Activated CD4-positive, alpha-beta T cell treated with anti-CD3 and anti-CD28 coated beads, Interleukin-2, amount 10 ng/mL, durations not matched to agents 24 days and 14 days (primary cell): ENCODE measurements at regions of chr9 and their contacts with region 1.

Region 1: DNA sequence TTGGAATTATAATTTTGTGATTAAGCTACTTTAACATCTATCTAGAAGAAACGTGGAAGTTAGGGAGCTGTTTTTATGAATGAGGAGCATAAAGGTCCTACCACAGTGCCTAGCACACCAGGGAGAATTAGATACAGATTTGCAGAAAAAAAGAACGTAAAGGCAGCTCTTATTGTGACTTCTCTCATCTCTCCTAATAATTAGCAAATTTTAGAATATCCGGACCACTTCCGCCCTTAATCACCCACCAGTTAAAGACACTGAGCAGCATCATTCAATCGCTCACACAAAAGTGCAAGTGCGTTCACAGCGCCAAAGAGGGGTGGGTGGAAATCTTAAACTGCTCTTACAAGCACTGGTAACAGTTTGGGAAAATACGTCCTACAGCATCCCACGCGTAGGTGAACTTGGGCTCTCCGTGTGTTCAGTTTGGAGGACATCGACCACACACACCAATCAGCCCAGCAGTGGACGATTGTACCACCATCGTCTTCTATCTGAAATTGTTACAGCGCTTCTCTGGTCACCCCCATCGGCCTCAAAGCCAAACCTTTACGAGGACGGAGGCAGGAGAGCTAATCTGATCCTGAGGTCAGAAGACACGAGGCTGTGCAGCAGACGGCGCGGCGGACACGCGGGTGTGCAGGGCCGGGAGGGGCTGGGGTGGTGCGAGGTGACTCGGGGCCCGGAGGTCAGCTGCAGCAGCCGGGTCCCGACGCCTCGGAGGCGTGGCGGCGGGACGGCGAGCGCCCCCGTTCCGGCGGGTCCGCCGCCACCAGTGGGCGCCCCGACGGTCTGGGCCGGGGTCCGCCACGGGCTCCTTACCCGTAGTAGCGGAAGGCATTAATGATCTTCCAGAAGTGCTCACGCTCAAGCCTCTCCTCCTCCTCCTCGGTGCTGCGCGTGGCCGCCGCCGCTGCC is 646 bp downstream of the CARNMT1 start:
- DNase-seq: peak; percentile 86
- H3K4me3 Mint-ChIP-seq: peak overlapping the region; percentile 96
- H3K27ac Mint-ChIP-seq: peak overlapping the region; percentile 99
- H3K4me1 Mint-ChIP-seq: peaks cover 37% of the 10 kb centered on the region
- H3K27me3 Mint-ChIP-seq: peaks cover 2% of the 10 kb centered on the region

Region 2: GRCh38 chr9:73132034-73132776 is 1895.2 kb before region 1 on chr9:
- intact Hi-C with region 1: loop called (anchors 5 kb)
- DNase-seq: peak; percentile 93
- H3K4me3 Mint-ChIP-seq: peak overlapping the region; percentile 82
- H3K27ac Mint-ChIP-seq: peak overlapping the region; percentile 91
- H3K4me1 Mint-ChIP-seq: peaks cover 40% of the 10 kb centered on the region
- H3K27me3 Mint-ChIP-seq: no peaks in the 10 kb centered on the region

Region 3: DNA sequence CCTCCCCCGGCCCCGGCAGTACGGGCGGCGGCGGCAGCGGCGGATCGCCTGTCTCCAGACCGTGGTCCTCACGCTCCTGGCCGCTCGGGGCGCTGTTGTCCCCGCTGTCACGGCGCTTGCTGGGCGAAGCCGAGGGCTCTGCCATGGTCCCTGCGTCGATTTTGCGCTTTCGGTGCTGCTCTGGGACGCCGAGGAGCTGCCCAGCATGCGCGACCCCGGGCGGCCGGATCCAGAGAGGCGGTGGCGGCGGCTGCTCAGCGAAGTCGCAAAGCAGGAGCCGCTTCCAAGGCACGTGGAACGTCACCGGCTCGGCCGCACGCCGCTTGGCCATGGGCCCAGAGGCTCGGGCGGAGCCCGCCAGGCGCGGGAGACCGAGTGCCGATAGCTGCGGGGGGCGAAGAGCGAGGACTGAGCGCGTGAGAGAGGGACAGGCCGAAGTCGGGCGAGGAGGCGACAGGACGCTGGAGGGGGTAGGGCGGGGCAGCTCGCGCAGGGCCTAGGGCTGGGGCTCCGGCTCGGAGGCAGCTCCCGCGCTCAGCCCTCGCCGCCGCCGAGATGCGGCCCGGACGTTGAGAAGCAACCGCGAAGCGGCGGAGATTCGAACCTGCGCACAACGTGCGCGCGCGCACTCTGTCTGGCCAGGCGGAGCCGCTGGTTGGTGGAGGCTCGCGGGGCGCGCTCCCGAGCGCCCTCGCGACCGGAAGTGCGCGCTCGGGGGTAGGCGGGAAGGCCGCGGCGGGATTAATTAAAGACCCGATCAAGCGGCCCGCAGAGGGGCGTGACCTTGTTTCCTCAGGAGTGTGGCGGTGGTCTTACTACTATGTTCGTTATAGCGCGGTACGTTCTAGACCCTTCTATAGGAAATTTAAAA is 74.9 kb before region 1 on chr9 and contains the start of gene C9orf40:
- intact Hi-C with region 1: loop called (anchors 1 kb)
- DNase-seq: peak; percentile 97
- H3K4me3 Mint-ChIP-seq: peak within 1 kb of the TSS; percentile 98
- H3K27ac Mint-ChIP-seq: peak within 1 kb of the TSS; percentile 97
- H3K4me1 Mint-ChIP-seq: peaks cover 39% of the 10 kb centered on the region
- H3K27me3 Mint-ChIP-seq: no peaks in the 10 kb centered on the region
- total RNA-seq, gene C9orf40: 19.6 and 20.0 TPM in 2 replicates

Region 4: DNA sequence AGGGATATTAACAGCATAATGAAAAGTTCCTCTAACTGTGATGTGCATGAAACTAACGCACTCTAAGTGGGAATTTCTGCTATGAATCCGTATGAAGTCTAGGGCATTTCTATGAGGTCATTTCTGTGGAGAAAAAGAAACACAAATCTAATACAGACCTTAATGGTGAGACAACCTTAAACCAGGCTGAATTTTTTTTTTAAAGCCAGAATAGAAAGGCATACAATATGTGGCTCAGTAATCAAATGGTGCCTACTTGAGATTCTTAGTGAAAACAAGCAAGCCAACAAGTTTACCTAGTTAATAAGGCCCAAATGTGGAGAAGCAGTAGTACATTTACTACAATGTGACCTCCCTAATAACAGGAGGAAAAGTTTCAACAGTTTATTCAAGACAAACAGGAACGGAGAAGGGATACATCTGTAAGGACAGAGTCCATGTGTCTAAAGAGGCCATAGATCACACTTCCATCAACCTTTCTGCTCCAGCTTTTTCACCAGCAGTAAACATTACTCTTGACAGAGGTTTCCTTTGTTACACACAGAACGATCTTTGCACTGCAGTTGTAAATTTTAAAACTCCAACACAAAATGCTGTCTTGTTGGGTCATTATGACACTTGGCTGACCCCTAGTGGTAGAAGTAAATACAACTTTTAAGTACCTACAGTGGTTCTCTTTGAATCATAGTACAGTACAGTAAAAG is 25.6 kb before region 1 on chr9:
- intact Hi-C with region 1: loop called (anchors 2 kb)
- DNase-seq: peak; percentile 77
- H3K4me3 Mint-ChIP-seq: no peak overlapping the region
- H3K27ac Mint-ChIP-seq: no peak overlapping the region
- H3K4me1 Mint-ChIP-seq: peaks cover 4% of the 10 kb centered on the region
- H3K27me3 Mint-ChIP-seq: no peaks in the 10 kb centered on the region

Region 5: GRCh38 chr9:75130621-75131230 is 103.3 kb after region 1 on chr9:
- intact Hi-C with region 1: no loop called
- DNase-seq: no peak
- H3K4me3 Mint-ChIP-seq: no peak overlapping the region
- H3K27ac Mint-ChIP-seq: peak overlapping the region; percentile 6
- H3K4me1 Mint-ChIP-seq: peaks cover 29% of the 10 kb centered on the region
- H3K27me3 Mint-ChIP-seq: no peaks in the 10 kb centered on the region

Region 6: GRCh38 chr9:75148561-75148960 is 121.1 kb after region 1 on chr9:
- intact Hi-C with region 1: loop called (anchors 1 kb)
- DNase-seq: peak; percentile 80
- H3K4me3 Mint-ChIP-seq: peak overlapping the region; percentile 62
- H3K27ac Mint-ChIP-seq: peak overlapping the region; percentile 85
- H3K4me1 Mint-ChIP-seq: peaks cover 63% of the 10 kb centered on the region
- H3K27me3 Mint-ChIP-seq: no peaks in the 10 kb centered on the region